Activated naive CD4-positive, alpha-beta T cell treated with anti-CD3 and anti-CD28 coated beads for 36 hours (primary cell): ENCODE measurements at regions of chr22 and their contacts with region 1.

Region 1: DNA sequence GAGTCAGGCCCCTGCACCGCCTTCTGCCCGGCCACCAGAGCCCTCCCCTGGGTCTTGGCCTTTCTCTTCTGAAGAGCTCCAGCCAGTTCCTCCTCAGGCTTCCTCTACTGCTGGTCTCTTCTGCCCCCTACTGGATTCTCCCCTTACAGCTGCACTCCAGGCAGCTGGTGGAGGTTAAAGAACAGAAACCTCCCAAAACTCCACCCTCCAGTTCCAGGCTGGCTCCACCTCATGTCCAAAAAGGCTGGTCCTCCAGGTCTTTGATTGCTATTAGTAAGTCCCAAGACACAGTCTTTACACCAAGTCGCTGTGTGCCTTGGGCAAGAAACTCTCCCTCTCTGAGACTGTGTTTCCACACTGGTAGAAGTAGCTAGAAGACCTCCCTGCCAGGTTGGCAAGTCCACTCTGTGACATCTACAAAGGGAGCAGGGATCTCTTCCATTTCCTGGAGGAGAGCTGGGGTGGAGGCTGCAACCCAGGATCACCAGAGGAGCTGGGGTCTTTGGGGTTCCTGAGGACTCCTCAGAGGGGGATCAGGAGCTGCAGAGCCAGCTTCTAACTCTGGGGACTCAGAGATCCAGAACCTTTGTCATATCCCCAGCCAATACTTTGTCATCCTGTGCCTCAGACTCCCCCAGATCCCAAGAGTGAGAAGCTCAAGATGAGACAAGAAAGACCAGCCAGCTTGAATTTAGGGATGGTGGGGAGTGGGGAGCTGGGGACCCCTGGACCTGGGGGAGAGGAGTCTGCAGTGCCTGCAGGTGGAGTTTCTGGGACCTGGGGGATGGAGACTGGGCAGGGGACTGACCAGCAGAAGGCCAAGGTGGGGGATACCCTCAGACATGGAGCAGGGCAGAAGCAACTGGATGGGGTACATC is 3.4 kb upstream of the IGLL5 start:
- DNase-seq: peak; percentile 79
- H3K4me3 Mint-ChIP-seq: no peak overlapping the region
- H3K27ac Mint-ChIP-seq: no peak overlapping the region
- H3K4me1 Mint-ChIP-seq: peaks cover 7% of the 10 kb centered on the region
- H3K27me3 Mint-ChIP-seq: no peaks in the 10 kb centered on the region

Region 2: DNA sequence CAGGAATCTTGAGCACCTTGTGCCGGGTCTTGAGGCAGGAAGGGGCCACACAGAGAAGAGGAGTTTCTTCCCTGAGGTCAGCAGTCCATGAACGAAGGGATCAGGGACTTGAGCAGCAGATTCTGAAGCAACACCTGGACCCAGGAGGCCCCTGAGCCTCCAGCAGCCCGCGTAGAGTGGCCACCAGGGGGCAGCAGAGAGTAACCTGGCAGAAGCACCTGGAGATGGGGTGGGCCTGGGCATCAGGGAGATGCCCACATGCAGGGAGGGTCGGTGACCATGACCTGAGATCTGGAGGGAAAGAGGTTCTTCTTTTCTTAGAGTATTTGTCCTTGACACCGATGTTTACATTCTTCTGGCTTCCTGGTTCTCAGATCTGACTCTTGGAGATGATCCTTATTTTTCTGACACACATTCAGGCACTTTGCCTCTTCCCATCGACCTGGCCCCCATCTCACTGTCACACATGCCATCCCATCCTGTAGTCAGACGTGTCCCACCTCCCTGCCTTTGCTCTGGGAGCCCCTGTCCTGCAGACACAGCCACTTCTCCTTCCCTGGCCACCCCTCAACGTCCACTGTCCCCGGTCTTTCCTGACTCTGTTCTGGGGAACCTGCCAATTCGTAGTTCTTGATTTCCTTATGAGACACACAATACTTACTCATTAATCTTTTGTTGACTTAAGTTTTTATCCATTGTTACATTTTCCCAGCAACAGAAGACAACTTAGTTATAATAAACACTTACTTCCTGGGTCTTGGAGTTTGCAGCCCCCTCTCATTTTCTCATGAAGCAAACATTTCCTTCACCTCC is 173.3 kb before region 1 on chr22:
- CTCF ChIA-PET with region 1: interaction called, 5 read pairs
- intact Hi-C with region 1: loop called (anchors 5 kb)
- DNase-seq: peak; percentile 82
- H3K4me3 Mint-ChIP-seq: no peak overlapping the region
- H3K27ac Mint-ChIP-seq: no peak overlapping the region
- H3K4me1 Mint-ChIP-seq: no peaks in the 10 kb centered on the region
- H3K27me3 Mint-ChIP-seq: no peaks in the 10 kb centered on the region

Region 3: DNA sequence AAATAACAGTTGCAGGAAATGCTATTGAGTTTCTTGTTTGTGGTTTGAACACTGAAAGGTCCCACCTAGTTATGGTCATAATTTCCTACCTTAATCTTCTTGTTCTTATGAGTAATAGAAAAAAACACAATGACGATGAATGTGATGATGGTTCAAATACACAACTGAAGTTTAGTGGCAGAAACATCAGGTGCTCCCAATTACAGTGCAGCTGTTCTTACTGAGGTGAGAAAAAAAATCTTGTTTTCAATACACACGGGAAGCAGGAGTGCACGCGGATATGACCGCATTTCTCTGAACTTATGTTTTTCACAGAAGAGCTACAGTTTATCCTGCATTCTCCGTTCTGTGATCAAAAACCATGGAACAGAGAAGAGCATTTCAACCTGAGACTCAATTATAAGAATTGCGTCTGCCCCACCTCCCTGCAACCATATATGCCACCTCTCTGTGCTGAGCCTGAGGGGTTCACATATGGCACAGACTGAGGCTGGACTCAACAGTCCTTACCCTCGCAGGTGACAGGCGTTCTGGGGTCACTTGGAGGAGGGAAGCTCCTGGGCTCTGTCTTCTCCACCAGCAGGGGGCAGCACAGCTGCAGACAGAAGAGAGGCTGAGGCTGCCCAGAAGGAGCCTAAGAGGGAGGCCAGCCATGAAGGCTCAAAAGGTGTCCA is 96.3 kb before region 1 on chr22:
- CTCF ChIA-PET with region 1: interaction called, 73 read pairs
- intact Hi-C with region 1: loop called (anchors 1 kb)
- DNase-seq: peak; percentile 74
- H3K4me3 Mint-ChIP-seq: no peak overlapping the region
- H3K27ac Mint-ChIP-seq: no peak overlapping the region
- H3K4me1 Mint-ChIP-seq: peaks cover 16% of the 10 kb centered on the region
- H3K27me3 Mint-ChIP-seq: no peaks in the 10 kb centered on the region

Region 4: GRCh38 chr22:22818861-22819855 is 65.1 kb before region 1 on chr22:
- CTCF ChIA-PET with region 1: interaction called, 120 read pairs
- intact Hi-C with region 1: no loop called
- DNase-seq: peak; percentile 37
- H3K4me3 Mint-ChIP-seq: no peak overlapping the region
- H3K27ac Mint-ChIP-seq: no peak overlapping the region
- H3K4me1 Mint-ChIP-seq: peaks cover 90% of the 10 kb centered on the region
- H3K27me3 Mint-ChIP-seq: no peaks in the 10 kb centered on the region

Region 5: GRCh38 chr22:22855617-22856308 is 28.5 kb before region 1 on chr22:
- CTCF ChIA-PET with region 1: interaction called, 82 read pairs
- intact Hi-C with region 1: no loop called
- DNase-seq: peak; percentile 48
- H3K4me3 Mint-ChIP-seq: no peak overlapping the region
- H3K27ac Mint-ChIP-seq: no peak overlapping the region
- H3K4me1 Mint-ChIP-seq: no peaks in the 10 kb centered on the region
- H3K27me3 Mint-ChIP-seq: no peaks in the 10 kb centered on the region

Region 6: DNA sequence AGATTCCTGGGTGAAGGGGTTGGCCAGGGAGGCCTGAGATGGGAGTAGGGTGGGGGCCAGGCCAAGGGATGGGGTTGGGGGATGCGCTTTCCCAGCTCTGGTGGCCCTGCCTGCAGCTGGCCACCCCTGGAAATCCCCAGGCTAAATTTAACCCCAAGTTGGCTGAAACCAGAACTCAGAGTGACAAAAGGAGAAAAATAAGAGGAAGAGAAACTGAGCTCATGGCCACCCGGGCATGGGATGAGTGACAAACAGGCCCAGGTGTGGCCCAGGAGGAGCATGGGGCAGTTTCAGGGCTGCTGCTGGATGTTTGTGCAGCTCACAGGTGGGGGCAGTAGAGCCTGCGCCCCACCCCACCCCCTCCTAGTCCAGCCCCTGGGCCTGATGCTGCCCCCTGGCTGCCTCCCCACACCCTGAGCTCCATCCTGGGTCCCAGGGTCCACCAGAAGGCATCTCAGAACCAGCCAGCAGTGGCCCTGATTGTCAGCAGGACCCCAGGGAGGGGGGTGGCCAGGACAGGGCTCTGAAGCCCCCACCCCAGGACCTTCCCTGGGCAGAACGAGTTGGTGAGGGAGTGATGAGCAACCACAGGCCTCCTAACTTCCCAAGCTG is 51.4 kb after region 1 on chr22:
- CTCF ChIA-PET with region 1: interaction called, 4 read pairs
- intact Hi-C with region 1: loop called (anchors 5 kb)
- DNase-seq: peak; percentile 31
- H3K4me3 Mint-ChIP-seq: no peak overlapping the region
- H3K27ac Mint-ChIP-seq: no peak overlapping the region
- H3K4me1 Mint-ChIP-seq: peaks cover 4% of the 10 kb centered on the region
- H3K27me3 Mint-ChIP-seq: no peaks in the 10 kb centered on the region